PC-3 (cell line): ENCODE measurements at regions of chr12 and their contacts with region 1.

Region 1: DNA sequence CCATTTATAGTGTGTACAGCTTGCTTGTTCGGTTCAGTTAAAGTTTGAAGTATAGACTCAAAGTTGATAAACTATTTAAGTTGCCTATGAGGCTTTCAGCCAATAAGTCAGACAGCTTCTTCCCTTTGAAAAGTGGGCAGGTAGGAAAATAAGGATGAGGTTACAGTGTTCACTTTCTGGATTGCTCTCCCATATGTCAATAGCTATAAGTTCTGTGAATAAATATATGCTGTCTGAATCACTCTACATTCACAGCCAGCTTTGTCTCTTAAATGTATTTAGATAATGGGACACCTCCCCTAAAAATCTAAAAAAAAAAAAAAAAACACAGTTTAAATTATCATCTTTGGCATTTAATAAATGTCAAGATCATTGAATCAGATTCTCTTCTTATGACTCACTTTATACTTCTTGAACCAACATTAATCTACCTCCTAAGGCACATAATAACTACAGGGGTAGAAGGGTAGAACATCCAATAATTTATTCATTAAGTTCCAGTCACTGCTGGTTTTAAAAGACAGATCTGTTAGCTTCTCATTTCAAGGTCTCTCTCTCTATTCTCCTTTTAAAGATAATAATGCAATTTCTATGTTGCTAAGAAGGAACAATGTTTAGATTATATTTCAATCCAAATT is 126.4 kb upstream of the PCED1B start:
- DNase-seq: peak; percentile 79
- ATAC-seq: peak; percentile 96
- H3K4me3 ChIP-seq: 0 out of 2 replicates have a peak overlapping the region, but pooled peaks have one; percentile 0
- H3K27ac ChIP-seq: peak overlapping the region; percentile 38
- H3K4me1 ChIP-seq: peaks cover 32% of the 10 kb centered on the region
- H3K27me3 ChIP-seq: no peaks in the 10 kb centered on the region
- CTCF ChIP-seq: no peak

Region 2: GRCh38 chr12:46752396-46752795 is 200.6 kb before region 1 on chr12:
- CTCF ChIA-PET with region 1: no interaction called
- POLR2A ChIA-PET with region 1: interaction called, 20 read pairs
- intact Hi-C with region 1: no loop called
- DNase-seq: peak; percentile 76
- ATAC-seq: peak; percentile 77
- H3K4me3 ChIP-seq: no peak overlapping the region
- H3K27ac ChIP-seq: peak overlapping the region; percentile 8
- H3K4me1 ChIP-seq: peaks cover 16% of the 10 kb centered on the region
- H3K27me3 ChIP-seq: no peaks in the 10 kb centered on the region
- CTCF ChIP-seq: no peak

Region 3: DNA sequence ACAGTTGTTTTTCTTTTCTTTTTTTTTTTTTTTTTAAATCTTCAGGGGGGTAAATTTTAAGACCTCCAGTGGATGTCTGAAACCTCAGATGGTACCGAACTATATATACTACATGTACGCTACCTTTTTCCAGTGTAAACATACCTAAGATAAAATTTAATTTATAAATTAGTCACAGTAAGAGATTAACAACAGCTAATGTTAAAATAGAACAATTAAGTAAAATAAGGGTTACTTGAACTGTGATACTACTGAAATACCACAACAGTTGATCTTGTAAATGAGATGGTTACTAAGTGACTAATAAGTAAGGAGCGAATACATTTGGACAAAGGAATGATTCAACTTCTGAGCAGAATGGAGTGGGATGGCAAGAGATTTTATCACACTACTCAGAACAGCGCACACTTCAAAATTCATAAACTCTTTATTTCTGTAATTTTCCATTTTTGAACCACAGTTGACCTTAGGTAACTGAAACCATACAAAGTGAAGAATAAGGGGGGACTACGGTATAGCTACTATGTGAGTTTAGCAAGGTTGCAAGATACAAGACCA is 45.9 kb after region 1 on chr12:
- CTCF ChIA-PET with region 1: interaction called, 13 read pairs
- POLR2A ChIA-PET with region 1: no interaction called
- intact Hi-C with region 1: no loop called
- DNase-seq: peak; percentile 86
- ATAC-seq: peak; percentile 100
- H3K4me3 ChIP-seq: no peak overlapping the region
- H3K27ac ChIP-seq: peak overlapping the region; percentile 51
- H3K4me1 ChIP-seq: peaks cover 20% of the 10 kb centered on the region
- H3K27me3 ChIP-seq: no peaks in the 10 kb centered on the region
- CTCF ChIP-seq: no peak